Tibial artery (tissue), 4 donors: ENCODE measurements at regions of chr13 and their contacts with region 1.

Region 1: DNA sequence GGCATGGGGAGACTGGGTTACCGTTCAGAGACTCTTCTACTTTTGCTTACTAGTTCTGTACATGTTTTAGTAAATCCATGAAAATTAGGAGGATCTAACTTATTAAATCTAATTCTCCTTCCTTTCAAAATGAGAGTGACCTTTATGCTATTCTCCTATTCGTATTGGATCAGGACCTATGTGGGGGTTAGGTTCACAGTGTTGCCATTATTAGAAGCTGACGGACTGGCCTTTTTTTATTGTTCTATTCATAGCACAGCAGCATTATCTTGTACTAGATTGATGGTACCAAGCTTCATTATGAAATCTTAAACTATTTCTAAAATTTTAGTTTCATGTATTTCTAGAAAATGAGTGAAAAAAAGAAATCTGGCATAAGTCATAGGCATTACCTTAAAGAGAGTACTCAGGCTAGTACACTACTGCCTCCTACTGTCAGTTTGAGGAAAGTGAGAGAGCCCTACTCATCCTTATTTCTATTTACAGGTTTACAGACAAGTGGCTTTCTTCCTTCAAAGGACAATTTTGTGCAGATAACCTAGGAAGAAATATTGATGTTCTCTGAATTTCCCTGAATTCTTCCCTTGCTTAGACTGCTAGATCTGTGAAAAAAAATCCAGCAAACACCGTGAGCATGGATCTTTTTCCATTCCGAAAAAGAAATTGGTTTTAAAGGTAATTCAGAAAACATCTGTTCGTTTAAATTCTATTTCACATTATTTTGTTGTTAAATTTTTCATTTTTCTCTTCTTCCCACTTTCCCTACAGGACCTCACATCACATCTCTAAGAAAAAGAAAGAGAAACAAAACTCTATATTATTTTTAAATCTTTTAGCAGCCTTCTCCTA is 485.5 kb downstream of the DIAPH3 start:
- DNase-seq: no peak
- H3K4me3 ChIP-seq: no peak overlapping the region
- H3K27ac ChIP-seq: no peak overlapping the region
- H3K4me1 ChIP-seq: peaks cover 0 to 2% (median 0%) of the 10 kb centered on the region in 4 donors
- H3K27me3 ChIP-seq: no peaks in the 10 kb centered on the region
- CTCF ChIP-seq: peak; percentile 46 to 52

Region 2: GRCh38 chr13:59623206-59623915 is 54.8 kb before region 1 on chr13:
- intact Hi-C with region 1: no loop called
- DNase-seq: no peak
- H3K4me3 ChIP-seq: no peak overlapping the region
- H3K27ac ChIP-seq: no peak overlapping the region
- H3K4me1 ChIP-seq: no peaks in the 10 kb centered on the region
- H3K27me3 ChIP-seq: no peaks in the 10 kb centered on the region
- CTCF ChIP-seq: no peak

Region 3: GRCh38 chr13:59901191-59901590 is 223.0 kb after region 1 on chr13:
- intact Hi-C with region 1: loop called (anchors 5 kb)
- DNase-seq: no peak
- H3K4me3 ChIP-seq: no peak overlapping the region
- H3K27ac ChIP-seq: no peak overlapping the region
- H3K4me1 ChIP-seq: no peaks in the 10 kb centered on the region
- H3K27me3 ChIP-seq: no peaks in the 10 kb centered on the region
- CTCF ChIP-seq: no peak